Activated T-helper 2 cell treated with anti-CD3 and anti-CD28 coated beads, Interferon-gamma antibody, Interleukin-2, Interleukin-4, amounts not matched to agents 10 μg/mL and 5 μg/mL and 100 μg/mL, durations not matched to agents 14 hours and 24 hours and 36 hours (primary cell): ENCODE measurements at regions of chr11 and their contacts with region 1.

Region 1: GRCh38 chr11:66371627-66372415 is at the start of gene SLC29A2:
- DNase-seq: peak; percentile 76
- H3K4me3 Mint-ChIP-seq: peak within 1 kb of the TSS; percentile 88
- H3K27ac Mint-ChIP-seq: peak within 1 kb of the TSS; percentile 87
- H3K4me1 Mint-ChIP-seq: peaks cover 15% of the 10 kb centered on the region
- H3K27me3 Mint-ChIP-seq: no peaks in the 10 kb centered on the region
- total RNA-seq, gene SLC29A2: 18.7 and 19.1 TPM in 2 replicates

Region 2: DNA sequence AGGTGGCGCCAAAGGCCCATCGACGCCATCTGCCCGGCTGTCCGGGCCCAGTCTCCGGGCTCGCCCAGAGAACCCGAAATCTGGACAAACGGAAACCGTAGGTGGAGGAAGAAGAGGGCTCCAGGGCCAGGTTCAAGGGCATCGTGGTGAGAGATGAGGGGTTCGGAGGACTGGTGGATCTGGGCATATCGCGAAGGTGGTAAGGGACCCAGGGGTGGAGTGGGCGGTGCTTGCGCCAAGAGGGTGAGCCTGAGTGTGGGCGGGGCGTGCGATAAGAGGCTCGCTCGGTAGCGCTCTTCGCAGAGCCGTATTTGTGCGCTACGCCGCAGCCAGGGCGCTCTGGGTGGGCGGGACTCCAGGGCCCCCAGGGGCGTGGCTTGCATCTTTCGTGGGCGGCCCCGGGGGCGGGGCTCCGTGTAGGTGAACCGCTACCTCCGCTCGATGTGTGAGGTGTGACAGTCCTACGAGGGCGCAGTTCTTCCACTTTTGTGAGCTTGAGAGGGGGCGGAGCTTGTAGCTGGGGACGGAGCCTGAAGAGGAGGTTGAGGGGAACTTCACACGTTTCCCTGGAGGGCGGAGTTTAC is 59.8 kb before region 1 on chr11:
- intact Hi-C with region 1: no loop called
- DNase-seq: peak; percentile 92
- H3K4me3 Mint-ChIP-seq: peak overlapping the region; percentile 93
- H3K27ac Mint-ChIP-seq: peak overlapping the region; percentile 96
- H3K4me1 Mint-ChIP-seq: peaks cover 8% of the 10 kb centered on the region
- H3K27me3 Mint-ChIP-seq: no peaks in the 10 kb centered on the region

Region 3: DNA sequence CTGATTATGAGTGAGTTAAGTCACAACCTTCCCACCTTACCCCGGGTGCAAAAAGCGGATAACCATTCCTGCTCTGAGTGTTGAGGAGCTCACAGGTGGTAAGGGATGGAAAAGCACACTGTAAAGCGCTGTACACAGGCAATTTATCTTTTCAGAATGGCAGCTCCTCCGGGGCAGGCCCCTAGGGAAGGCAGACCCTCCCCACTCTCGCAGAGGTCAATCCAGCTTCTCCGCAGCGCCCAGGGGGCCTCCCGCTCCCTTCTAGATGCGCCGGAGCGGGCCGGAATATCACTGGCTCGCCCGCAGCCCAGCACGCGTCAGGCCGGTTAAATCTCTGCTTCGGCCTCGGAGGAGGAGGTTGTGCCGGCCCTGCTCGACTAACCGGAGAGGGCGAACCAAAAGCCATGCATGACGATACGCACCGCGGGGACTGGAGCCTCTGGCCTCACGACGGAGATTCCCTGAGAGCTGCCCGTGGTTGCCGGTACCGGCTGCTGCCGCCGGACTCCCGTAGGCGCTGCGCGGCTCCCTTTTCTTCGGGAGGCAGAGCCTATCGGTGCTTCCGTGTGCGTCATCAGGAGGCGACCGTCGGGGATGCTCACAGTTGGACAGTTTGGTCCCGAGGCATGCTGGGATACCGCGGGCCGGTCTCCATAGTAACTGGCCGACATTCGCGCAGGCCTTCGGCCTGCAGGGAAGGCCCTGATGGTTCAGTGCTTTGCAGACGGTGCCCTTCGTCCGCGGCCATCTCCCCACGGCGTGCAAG is 27.1 kb before region 1 on chr11 and contains the start of gene BRMS1:
- intact Hi-C with region 1: loop called (anchors 1 kb)
- DNase-seq: peak; percentile 93
- H3K4me3 Mint-ChIP-seq: peak within 1 kb of the TSS; percentile 93
- H3K27ac Mint-ChIP-seq: peak within 1 kb of the TSS; percentile 91
- H3K4me1 Mint-ChIP-seq: peaks cover 32% of the 10 kb centered on the region
- H3K27me3 Mint-ChIP-seq: no peaks in the 10 kb centered on the region
- total RNA-seq, gene BRMS1: 45.1 and 46.0 TPM in 2 replicates

Region 4: DNA sequence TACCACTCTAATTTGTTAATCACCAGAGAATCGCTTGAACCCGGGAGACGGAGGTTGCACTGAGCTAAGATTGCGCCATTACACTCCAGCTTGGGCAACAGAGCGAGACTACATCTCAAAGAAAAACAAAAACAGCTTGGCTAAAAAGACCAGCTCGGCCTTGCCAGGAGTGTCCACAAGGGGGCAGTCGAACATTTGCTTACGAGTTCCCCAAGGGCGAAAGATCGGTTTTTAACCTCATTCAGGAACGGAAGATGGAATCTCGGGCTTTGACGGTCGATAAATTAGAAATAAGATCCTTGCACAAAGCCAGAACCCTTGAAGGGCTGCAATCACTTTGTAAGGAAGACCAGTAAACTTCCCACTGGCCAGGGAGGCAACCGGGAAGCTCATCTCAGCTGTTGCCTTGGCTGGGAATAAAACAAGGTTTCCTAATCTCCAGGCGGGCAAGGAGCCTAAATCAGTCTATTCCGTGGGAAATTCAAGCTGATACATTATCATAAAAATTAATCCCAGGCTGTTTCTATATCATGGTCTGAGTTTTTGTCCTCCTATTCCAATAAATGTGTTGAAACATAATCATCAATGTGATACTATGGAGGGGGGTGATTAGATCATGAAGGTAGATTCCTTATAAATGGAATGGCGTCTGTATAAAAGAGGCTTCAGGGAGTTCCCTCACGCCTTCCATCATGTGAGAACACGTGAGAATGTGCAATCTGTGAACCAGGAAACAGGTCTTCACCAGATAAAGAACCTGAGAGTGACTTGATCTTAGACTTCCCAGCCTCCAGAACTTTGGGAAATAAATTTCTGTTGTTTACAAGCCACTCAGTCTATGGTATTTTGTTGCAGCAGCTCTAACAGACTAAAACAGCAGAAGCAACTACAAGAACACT is 14.6 kb after region 1 on chr11:
- intact Hi-C with region 1: loop called (anchors 2 kb)
- DNase-seq: peak; percentile 71
- H3K4me3 Mint-ChIP-seq: peak overlapping the region; percentile 53
- H3K27ac Mint-ChIP-seq: no peak overlapping the region
- H3K4me1 Mint-ChIP-seq: peaks cover 8% of the 10 kb centered on the region
- H3K27me3 Mint-ChIP-seq: peaks cover 7% of the 10 kb centered on the region

Region 5: GRCh38 chr11:66545701-66546367 is 174.0 kb after region 1 on chr11 and contains the start of gene ZDHHC24:
- intact Hi-C with region 1: no loop called
- DNase-seq: peak; percentile 87
- H3K4me3 Mint-ChIP-seq: peak within 1 kb of the TSS; percentile 86
- H3K27ac Mint-ChIP-seq: peak within 1 kb of the TSS; percentile 58
- H3K4me1 Mint-ChIP-seq: peaks cover 24% of the 10 kb centered on the region
- H3K27me3 Mint-ChIP-seq: peaks cover 15% of the 10 kb centered on the region
- total RNA-seq, gene ZDHHC24: 14.0 and 14.4 TPM in 2 replicates